ENCODE measurements at regions of chr10 and their contacts with region 1.

Region 1: GRCh38 chr10:18044976-18045720 is 93.4 kb downstream of the SLC39A12 start:
- DNase-seq: peak; percentile 96
- ATAC-seq: peak; percentile 91
- H3K4me3 ChIP-seq: no peak overlapping the region
- H3K27ac ChIP-seq: peak overlapping the region; percentile 71; the same call in 1 of the 2 replicates
- H3K4me1 ChIP-seq: peaks cover 13% of the 10 kb centered on the region
- H3K27me3 ChIP-seq: peaks cover under 1% of the 10 kb centered on the region; the same call in 1 of the 2 replicates
- CTCF ChIP-seq: no peak
- POLR2A ChIP-seq: no peak
- RAD21 ChIP-seq: no peak

Region 2: DNA sequence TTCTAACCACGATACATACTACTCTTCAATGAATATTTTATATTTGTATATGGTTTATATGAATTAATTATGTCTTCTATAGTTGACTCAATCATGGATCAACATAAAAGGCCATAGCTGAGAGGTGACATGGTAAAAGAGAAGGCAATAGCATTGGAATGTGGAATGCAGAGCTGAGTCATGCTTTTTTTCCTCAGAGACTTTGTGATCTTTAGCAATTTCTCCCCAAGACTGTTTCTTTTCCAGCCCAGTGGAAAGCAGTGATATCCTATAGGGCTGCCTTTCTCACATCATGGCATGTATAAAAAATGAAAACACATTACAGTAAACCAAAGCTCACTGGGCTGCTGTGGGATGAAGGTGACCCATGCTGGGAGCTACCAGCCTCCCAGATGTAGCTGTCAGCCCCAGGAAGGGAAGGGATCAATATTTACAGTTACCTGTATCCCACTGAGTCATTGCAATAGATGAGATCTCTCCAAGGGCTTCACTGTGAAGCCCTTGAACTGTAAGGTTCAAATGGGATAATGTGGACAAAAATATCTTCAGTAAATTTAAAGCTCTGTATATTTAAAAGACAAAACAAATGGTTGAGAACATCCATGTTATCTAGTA is 63.3 kb before region 1 on chr10:
- CTCF ChIA-PET with region 1: no interaction called
- POLR2A ChIA-PET with region 1: no interaction called
- dilution Hi-C with region 1: no loop called
- in situ Hi-C with region 1: no loop called
- intact Hi-C with region 1: loop called (anchors 2 kb)
- DNase-seq: peak; percentile 93
- ATAC-seq: peak; percentile 94
- H3K4me3 ChIP-seq: no peak overlapping the region
- H3K27ac ChIP-seq: peak overlapping the region; percentile 66
- H3K4me1 ChIP-seq: peaks cover 9% of the 10 kb centered on the region
- H3K27me3 ChIP-seq: no peaks in the 10 kb centered on the region
- CTCF ChIP-seq: no peak
- POLR2A ChIP-seq: no peak
- RAD21 ChIP-seq: no peak